ENCODE measurements at regions of chr16 and their contacts with region 1.

Region 1: GRCh38 chr16:78002915-78003538 is 19.3 kb upstream of the CLEC3A start:
- DNase-seq: peak; percentile 91 to 97
- H3K4me3 ChIP-seq: no peak overlapping the region
- H3K27ac ChIP-seq: no peak overlapping the region
- H3K4me1 ChIP-seq: no peaks in the 10 kb centered on the region; a peak in 1 of 7 replicates
- H3K27me3 ChIP-seq: no peaks in the 10 kb centered on the region; a peak in 1 of 7 replicates
- CTCF ChIP-seq: peak; percentile 86 to 98 (median 93)
- EP300 ChIP-seq: peak in 1 of 2 experiments; percentile 27; a peak in 1 of 3 replicates
- POLR2A ChIP-seq: no peak
- RAD21 ChIP-seq: peak; percentile 98 to 99

Region 2: GRCh38 chr16:77675464-77676324 is 327.3 kb before region 1 on chr16:
- CTCF ChIA-PET with region 1: interaction called, 50 read pairs
- POLR2A ChIA-PET with region 1: no interaction called
- DNase-seq: peak; percentile 29 to 87
- H3K4me3 ChIP-seq: no peak overlapping the region
- H3K27ac ChIP-seq: no peak overlapping the region
- H3K4me1 ChIP-seq: no peaks in the 10 kb centered on the region; a peak in 1 of 7 replicates
- H3K27me3 ChIP-seq: peaks cover 0 to 1% (median 0%) of the 10 kb centered on the region in 4 experiments; a peak in 1 of 7 replicates
- CTCF ChIP-seq: peak; percentile 44 to 95 (median 91)
- EP300 ChIP-seq: no peak
- POLR2A ChIP-seq: no peak
- RAD21 ChIP-seq: peak; percentile 99 to 100

Region 3: DNA sequence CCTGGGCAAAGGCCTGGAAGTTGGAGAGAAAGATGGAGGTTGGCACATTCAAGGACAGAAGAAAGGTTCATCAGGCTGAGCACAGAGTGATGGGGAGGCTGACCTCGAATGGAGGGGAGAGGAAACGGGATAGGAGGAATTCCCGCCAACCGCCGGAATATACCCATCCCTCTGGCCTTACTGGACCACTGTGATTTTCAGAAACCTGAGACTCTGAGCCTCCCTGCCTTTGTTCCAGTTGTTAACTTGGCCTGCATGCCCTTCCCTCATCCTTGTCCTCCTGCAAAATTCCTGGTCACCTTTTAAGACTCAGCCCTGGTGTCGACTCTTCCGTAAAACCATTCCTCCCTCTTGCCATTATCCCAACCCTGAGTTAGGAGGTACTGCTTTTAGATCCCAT is 107.1 kb before region 1 on chr16:
- CTCF ChIA-PET with region 1: no interaction called
- POLR2A ChIA-PET with region 1: no interaction called
- DNase-seq: no peak
- H3K4me3 ChIP-seq: no peak overlapping the region
- H3K27ac ChIP-seq: no peak overlapping the region
- H3K4me1 ChIP-seq: 0 out of 7 replicates have a peak, but pooled peaks cover 0 to 6% (median 0%) of the 10 kb centered on the region in 4 experiments
- H3K27me3 ChIP-seq: no peaks in the 10 kb centered on the region
- CTCF ChIP-seq: no peak
- EP300 ChIP-seq: no peak
- POLR2A ChIP-seq: no peak
- RAD21 ChIP-seq: no peak

Region 4: GRCh38 chr16:77951775-77952174 is 51.3 kb before region 1 on chr16:
- CTCF ChIA-PET with region 1: interaction called, 25 read pairs
- POLR2A ChIA-PET with region 1: no interaction called
- DNase-seq: no peak
- H3K4me3 ChIP-seq: no peak overlapping the region
- H3K27ac ChIP-seq: no peak overlapping the region
- H3K4me1 ChIP-seq: peaks cover 0 to 9% (median 7%) of the 10 kb centered on the region in 4 experiments; a peak in 5 of 7 replicates
- H3K27me3 ChIP-seq: no peaks in the 10 kb centered on the region
- CTCF ChIP-seq: peak in 2 of 3 experiments; percentile 50 to 62; a peak in 3 of 4 replicates
- EP300 ChIP-seq: no peak
- POLR2A ChIP-seq: no peak
- RAD21 ChIP-seq: peak; percentile 70 to 72

Region 5: GRCh38 chr16:77971306-77972271 is 31.4 kb before region 1 on chr16:
- CTCF ChIA-PET with region 1: interaction called, 218 read pairs
- POLR2A ChIA-PET with region 1: interaction called, 3 read pairs
- DNase-seq: peak; percentile 82 to 95
- H3K4me3 ChIP-seq: no peak overlapping the region
- H3K27ac ChIP-seq: no peak overlapping the region
- H3K4me1 ChIP-seq: peaks cover 5 to 10% (median 7%) of the 10 kb centered on the region in 4 experiments; a peak in 6 of 7 replicates
- H3K27me3 ChIP-seq: no peaks in the 10 kb centered on the region
- CTCF ChIP-seq: peak; percentile 72 to 91 (median 88)
- EP300 ChIP-seq: no peak
- POLR2A ChIP-seq: no peak
- RAD21 ChIP-seq: peak; percentile 96 to 97

Region 6: DNA sequence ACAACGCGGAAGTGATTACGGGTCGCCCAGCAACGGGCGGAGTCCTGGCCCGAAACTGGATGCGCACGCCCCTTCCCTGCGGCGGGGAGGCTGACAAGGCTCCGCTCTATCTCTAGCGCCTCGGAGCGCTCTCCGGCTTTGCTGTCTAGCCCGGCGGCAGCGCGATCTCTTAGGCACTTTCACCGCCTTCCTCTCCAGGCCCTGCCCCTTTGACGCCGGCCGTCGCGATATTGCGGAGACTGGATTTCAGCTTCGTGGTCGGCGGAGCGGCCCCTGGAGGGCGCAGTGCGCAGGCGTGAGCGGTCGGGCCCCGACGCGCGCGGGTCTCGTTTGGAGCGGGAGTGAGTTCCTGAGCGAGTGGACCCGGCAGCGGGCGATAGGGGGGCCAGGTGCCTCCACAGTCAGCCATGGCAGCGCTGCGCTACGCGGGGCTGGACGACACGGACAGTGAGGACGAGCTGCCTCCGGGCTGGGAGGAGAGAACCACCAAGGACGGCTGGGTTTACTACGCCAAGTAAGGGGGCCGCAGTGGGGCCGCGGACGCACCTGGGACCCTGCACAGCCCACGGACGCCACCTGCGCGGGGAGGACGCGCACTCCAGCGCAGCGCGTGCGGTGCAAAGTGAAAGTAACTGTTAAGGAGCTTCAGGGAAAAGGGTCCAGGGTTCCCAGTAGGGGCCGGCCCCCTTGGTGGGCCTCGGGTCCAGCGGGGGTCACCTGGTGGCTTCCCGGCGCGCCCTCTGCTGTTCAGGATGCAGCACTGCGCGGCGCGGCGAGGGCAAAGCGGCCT is 96.5 kb after region 1 on chr16 and contains the start of gene WWOX:
- CTCF ChIA-PET with region 1: interaction called, 14 read pairs
- POLR2A ChIA-PET with region 1: no interaction called
- DNase-seq: peak; percentile 92 to 93
- H3K4me3 ChIP-seq: peak within 1 kb of the TSS; percentile 85 to 99 (median 90)
- H3K27ac ChIP-seq: peak within 1 kb of the TSS; percentile 6; the same call in 1 of the 2 replicates
- H3K4me1 ChIP-seq: peaks cover 0 to 3% (median 0%) of the 10 kb centered on the region in 4 experiments; a peak in 2 of 7 replicates
- H3K27me3 ChIP-seq: peaks cover 0 to 11% (median 2%) of the 10 kb centered on the region in 4 experiments; a peak in 3 of 7 replicates
- CTCF ChIP-seq: peak; percentile 75 to 91 (median 85)
- EP300 ChIP-seq: 0 out of 3 replicates have a peak, but pooled peaks of 1 of the 2 experiments have one; percentile 50
- POLR2A ChIP-seq: peak in 1 of 2 experiments; percentile 19; a peak in 1 of 3 replicates
- RAD21 ChIP-seq: peak; percentile 37 to 61; a peak in 3 of 4 replicates
- total RNA-seq, gene WWOX: 16.7 and 17.2 TPM in 2 replicates

Measured in H1 (cell line).